Thyroid gland (tissue), 4 donors: ENCODE measurements at regions of chr6 and their contacts with region 1.

Region 1: GRCh38 chr6:159104163-159104925 is 59.6 kb upstream of the TAGAP start:
- DNase-seq: peak; percentile 69 to 78
- H3K4me3 ChIP-seq: no peak overlapping the region
- H3K27ac ChIP-seq: no peak overlapping the region
- H3K4me1 ChIP-seq: peaks cover 23 to 28% of the 10 kb centered on the region in 2 donors
- H3K27me3 ChIP-seq: no peaks in the 10 kb centered on the region
- CTCF ChIP-seq: peak; percentile 68 to 95 (median 89)
- POLR2A ChIP-seq: no peak

Region 2: GRCh38 chr6:159042003-159042825 is 62.1 kb before region 1 on chr6:
- intact Hi-C with region 1: loop called (anchors 5 kb)
- DNase-seq: peak; percentile 66 to 75
- H3K4me3 ChIP-seq: no peak overlapping the region
- H3K27ac ChIP-seq: no peak overlapping the region
- H3K4me1 ChIP-seq: peaks cover 0 to 3% of the 10 kb centered on the region in 2 donors
- H3K27me3 ChIP-seq: no peaks in the 10 kb centered on the region
- CTCF ChIP-seq: peak; percentile 69 to 93 (median 88)
- POLR2A ChIP-seq: no peak

Region 3: DNA sequence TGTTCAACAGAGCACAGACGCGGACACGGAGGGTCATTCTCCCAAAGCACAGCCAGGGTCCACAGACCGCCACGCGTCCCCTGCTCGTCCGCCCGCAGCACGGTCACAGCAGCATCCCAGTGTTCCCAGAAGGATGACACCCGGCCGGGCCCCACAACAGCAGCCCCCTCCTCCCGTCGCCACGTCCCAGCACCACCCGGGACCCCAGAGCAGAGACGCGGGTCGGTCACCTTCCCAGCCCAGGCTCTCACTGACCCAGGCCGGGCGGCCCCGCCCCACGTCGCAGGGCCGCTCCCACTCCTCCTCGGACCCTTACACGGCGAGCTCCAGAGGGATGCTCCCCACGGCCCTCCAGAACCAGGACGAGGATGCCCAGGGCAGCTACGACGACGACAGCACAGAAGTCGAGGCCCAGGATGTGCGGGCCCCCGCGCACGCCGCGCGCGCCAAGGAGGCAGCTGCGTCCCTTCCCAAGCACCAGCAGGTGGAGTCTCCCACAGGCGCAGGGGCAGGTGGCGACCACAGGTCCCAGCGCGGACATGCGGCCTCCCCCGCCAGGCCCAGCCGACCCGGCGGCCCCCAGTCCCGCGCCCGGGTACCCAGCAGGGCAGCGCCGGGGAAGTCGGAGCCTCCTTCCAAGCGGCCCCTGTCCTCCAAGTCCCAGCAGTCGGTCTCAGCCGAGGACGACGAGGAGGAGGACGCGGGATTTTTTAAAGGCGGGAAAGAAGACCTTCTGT is 129.2 kb after region 1 on chr6:
- intact Hi-C with region 1: no loop called
- DNase-seq: no peak
- H3K4me3 ChIP-seq: no peak overlapping the region
- H3K27ac ChIP-seq: no peak overlapping the region
- H3K4me1 ChIP-seq: no peaks in the 10 kb centered on the region
- H3K27me3 ChIP-seq: no peaks in the 10 kb centered on the region
- CTCF ChIP-seq: no peak
- POLR2A ChIP-seq: no peak